Activated CD8-positive, alpha-beta memory T cell treated with anti-CD3 and anti-CD28 coated beads, Interleukin-2, amount 10 ng/mL, durations not matched to agents 7 days and 5 days (primary cell): ENCODE measurements at regions of chr1 and their contacts with region 1.

Region 1: DNA sequence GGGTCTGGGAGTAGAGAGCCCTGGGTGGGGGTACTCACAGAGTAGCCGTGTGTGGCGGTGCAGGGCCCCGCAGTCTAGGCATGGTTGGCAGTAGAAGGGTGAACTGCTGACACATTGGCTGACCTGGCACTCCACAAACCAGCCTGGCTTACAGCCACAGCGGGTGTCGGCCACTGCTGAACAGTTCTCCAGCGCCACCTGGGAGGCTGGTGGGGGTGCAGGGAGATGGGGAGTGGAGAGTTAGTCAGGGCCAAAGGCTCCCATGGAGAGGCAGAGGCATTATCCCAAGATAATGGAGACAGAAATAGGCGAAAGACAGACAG is 1.5 kb downstream of the TNFRSF25 start:
- DNase-seq: no peak
- ATAC-seq: no peak
- H3K4me3 Mint-ChIP-seq: peak overlapping the region; percentile 79
- H3K27ac Mint-ChIP-seq: peak overlapping the region; percentile 78
- H3K4me1 Mint-ChIP-seq: peaks cover 40% of the 10 kb centered on the region
- H3K27me3 Mint-ChIP-seq: no peaks in the 10 kb centered on the region

Region 2: DNA sequence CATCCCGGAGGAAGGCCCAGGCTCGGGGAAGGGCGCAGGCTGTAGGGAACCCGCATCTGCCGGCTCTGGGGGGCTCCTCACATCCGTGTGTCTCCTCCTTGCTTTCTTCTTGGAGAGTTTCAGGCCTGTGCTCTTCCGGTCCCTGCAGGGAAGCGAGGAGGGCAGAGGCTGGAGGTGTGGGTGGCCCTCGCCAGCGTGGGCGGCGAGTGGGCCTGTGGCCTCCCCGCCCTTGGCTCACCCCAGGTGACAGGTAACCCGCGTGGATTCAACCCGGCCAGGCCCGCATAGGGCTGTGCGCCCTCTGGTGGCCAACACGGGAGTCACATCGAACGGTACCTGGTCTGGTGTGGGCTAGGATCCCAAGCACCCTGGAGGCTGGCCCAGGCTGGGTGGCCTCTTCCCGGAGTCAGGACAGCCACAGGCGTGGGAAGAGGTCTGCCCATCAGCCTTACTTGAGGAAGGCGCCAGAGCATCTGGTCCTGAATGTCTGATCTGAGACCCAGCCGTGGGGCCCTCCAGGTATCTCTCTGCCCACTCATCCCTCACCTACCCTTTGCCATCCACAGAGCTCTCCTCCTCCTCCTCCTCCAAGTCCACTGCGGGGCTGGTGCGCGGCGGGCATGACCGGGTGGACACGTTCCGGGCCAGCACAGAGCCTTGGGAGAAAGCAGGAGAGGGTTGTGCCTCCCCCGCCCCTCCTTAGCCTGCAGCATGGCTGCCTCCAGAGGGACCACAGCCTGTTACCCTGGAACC is 11.1 kb after region 1 on chr1:
- CTCF ChIA-PET with region 1: interaction called, 10 read pairs
- DNase-seq: peak; percentile 79
- ATAC-seq: peak; percentile 91
- H3K4me3 Mint-ChIP-seq: no peak overlapping the region
- H3K27ac Mint-ChIP-seq: no peak overlapping the region
- H3K4me1 Mint-ChIP-seq: no peaks in the 10 kb centered on the region
- H3K27me3 Mint-ChIP-seq: no peaks in the 10 kb centered on the region

Region 3: DNA sequence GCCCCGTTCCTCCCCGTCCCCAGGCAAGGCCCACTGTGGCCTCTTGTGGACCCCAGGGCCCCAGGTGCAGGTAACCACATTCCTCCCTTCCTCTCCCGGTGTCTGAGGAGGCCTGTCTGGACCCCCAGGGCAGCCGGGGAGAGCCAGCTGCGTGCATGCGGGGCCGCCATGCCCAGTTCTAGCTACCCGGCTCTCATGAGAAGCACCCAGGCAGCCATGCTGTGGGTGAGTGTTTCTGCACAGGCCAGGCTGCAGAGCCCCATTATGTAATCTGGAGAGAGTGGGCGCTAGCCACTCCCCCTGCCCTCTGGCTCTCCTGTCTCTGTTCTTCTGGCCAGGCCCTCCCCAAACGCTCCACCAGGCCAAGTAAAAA is 45.4 kb after region 1 on chr1:
- CTCF ChIA-PET with region 1: no interaction called
- DNase-seq: no peak
- ATAC-seq: no peak
- H3K4me3 Mint-ChIP-seq: no peak overlapping the region
- H3K27ac Mint-ChIP-seq: no peak overlapping the region
- H3K4me1 Mint-ChIP-seq: no peaks in the 10 kb centered on the region
- H3K27me3 Mint-ChIP-seq: no peaks in the 10 kb centered on the region

Region 4: DNA sequence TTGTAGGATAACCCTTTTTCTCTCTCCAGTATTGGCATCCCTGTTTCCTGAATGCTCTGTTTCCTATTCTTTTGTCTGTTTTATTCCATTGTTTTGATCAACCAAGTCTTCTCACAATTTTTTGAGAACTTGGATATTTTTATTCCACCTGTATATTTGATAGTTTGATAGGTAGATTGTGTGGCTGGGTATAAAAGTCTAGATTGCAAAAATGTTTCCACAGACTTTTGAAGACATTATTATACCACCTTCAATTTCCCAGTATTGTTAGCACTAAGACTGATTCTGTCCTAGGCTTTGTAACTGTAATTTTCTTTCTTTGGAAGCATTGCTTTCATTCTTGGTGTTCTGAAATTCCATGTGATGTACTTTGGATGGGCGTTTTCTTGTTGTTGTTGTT is 246.7 kb after region 1 on chr1:
- CTCF ChIA-PET with region 1: no interaction called
- DNase-seq: no peak
- ATAC-seq: no peak
- H3K4me3 Mint-ChIP-seq: no peak overlapping the region
- H3K27ac Mint-ChIP-seq: no peak overlapping the region
- H3K4me1 Mint-ChIP-seq: no peaks in the 10 kb centered on the region
- H3K27me3 Mint-ChIP-seq: peaks cover 14% of the 10 kb centered on the region